ENCODE measurements at regions of chr2 and their contacts with region 1.

Region 1: GRCh38 chr2:98771721-98772524 is 41.0 kb upstream of the MGAT4A start:
- DNase-seq: peak; percentile 75
- ATAC-seq: peak; percentile 68
- H3K4me3 Mint-ChIP-seq: peak overlapping the region; percentile 74
- H3K27ac Mint-ChIP-seq: peak overlapping the region; percentile 95
- H3K4me1 Mint-ChIP-seq: peaks cover 72% of the 10 kb centered on the region
- H3K27me3 Mint-ChIP-seq: no peaks in the 10 kb centered on the region

Region 2: GRCh38 chr2:98465456-98466226 is 306.3 kb before region 1 on chr2:
- CTCF ChIA-PET with region 1: no interaction called
- POLR2A ChIA-PET with region 1: no interaction called
- intact Hi-C with region 1: loop called in 1 of 2 experiments (anchors 10 kb)
- DNase-seq: peak; percentile 78
- ATAC-seq: peak; percentile 16
- H3K4me3 Mint-ChIP-seq: peak overlapping the region; percentile 69
- H3K27ac Mint-ChIP-seq: peak overlapping the region; percentile 96
- H3K4me1 Mint-ChIP-seq: peaks cover 90% of the 10 kb centered on the region
- H3K27me3 Mint-ChIP-seq: no peaks in the 10 kb centered on the region

Region 3: DNA sequence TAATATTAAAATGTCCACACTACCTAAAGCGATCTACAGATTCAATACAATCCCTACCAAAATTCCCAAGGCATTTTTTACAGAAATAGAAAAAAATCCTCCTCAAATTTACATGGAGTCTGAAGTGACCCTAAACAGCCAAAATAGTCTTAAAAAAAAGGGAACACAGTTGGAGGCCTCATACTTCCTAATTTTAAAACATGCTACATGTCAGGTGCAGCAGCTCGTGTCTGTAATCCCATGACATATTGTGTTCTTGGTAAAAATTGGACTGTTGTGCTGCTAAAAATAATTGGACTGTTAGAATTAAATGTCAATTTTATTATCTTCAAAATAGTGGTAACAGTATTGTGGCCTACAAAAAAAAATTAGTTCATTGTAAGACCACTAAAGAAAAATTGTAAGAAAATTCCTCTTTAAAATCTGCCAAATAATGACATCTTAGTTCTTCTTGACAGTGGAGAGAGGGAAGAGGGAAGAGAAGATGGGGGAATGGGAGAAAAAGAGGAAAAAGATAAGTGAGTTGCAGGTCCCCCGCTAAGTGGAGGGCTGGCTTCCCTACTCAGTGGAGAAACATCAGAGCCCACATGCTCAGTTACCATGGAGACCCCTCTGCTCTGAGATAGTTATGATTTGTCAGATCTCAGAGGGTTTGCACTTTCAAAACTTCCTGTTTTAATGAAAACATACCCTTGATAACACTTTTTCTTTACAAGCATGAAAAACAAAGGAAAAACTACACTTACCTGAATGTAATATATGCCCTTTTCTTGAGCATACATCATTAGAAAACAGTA is 117.0 kb before region 1 on chr2:
- CTCF ChIA-PET with region 1: interaction called, 11 read pairs
- POLR2A ChIA-PET with region 1: no interaction called
- intact Hi-C with region 1: loop called in 1 of 2 experiments (anchors 2 kb)
- DNase-seq: peak; percentile 48
- ATAC-seq: peak; percentile 38
- H3K4me3 Mint-ChIP-seq: peak overlapping the region; percentile 42
- H3K27ac Mint-ChIP-seq: peak overlapping the region; percentile 72
- H3K4me1 Mint-ChIP-seq: peaks cover 80% of the 10 kb centered on the region
- H3K27me3 Mint-ChIP-seq: no peaks in the 10 kb centered on the region

Region 4: DNA sequence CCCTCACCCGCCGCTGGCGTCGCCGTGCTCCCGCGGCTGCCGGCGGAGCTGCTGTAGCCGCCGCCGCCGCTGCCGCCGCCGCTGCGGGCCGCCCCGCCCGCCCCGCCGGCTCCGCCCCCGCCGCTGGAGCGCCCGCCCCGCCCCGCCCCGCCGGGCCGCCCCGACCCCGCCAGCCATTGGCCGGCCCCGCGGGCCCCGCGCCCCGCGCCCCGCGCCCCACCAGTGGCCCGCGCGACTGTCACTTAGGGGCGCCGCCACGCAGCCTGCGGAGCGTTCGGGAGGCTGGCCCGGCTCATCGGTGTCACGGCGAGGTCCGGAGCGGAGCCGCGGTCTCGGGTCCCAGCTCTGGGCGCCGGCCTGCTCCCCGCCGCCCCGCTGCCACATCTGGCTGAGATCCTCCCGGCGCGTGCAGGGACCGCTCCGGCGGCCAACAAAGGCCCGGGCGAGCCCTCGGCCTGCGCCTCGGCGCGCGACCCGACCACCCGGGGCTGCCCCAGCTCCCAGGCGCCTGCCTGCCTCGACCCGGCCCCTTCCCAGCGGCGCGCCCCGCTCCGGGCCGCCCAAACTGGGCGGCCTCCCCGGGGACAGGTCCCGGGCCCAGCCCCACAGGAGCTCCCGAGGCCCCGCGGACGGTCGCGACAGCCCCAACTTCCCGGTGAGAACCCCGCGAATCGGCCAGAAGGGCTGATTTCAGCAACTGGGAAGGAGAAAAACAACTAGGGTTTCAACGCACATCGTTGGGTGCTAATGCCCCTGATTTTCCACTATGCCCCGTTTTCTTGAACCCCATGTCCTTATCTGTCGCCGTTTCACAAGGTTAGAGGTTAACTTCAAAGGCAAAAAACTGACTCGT is 40.7 kb before region 1 on chr2 and contains the start of gene MGAT4A:
- CTCF ChIA-PET with region 1: interaction called, 4 read pairs
- POLR2A ChIA-PET with region 1: interaction called, 16 read pairs
- intact Hi-C with region 1: loop called (anchors 1 kb)
- DNase-seq: peak; percentile 87
- ATAC-seq: peak; percentile 80
- H3K4me3 Mint-ChIP-seq: peak within 1 kb of the TSS; percentile 88
- H3K27ac Mint-ChIP-seq: peak within 1 kb of the TSS; percentile 93
- H3K4me1 Mint-ChIP-seq: peaks cover 67% of the 10 kb centered on the region
- H3K27me3 Mint-ChIP-seq: no peaks in the 10 kb centered on the region
- total RNA-seq, gene MGAT4A: 49.4 to 67.5 TPM

Region 5: GRCh38 chr2:98757904-98758421 is 14.0 kb before region 1 on chr2:
- CTCF ChIA-PET with region 1: interaction called, 16 read pairs
- POLR2A ChIA-PET with region 1: interaction called, 3 read pairs
- intact Hi-C with region 1: loop called in 1 of 2 experiments (anchors 1 kb)
- DNase-seq: peak; percentile 68
- ATAC-seq: peak; percentile 54
- H3K4me3 Mint-ChIP-seq: peak overlapping the region; percentile 57
- H3K27ac Mint-ChIP-seq: peak overlapping the region; percentile 95
- H3K4me1 Mint-ChIP-seq: peaks cover 49% of the 10 kb centered on the region
- H3K27me3 Mint-ChIP-seq: no peaks in the 10 kb centered on the region

Region 6: GRCh38 chr2:98835831-98836385 is 64.0 kb after region 1 on chr2:
- CTCF ChIA-PET with region 1: interaction called, 4 read pairs
- POLR2A ChIA-PET with region 1: no interaction called
- intact Hi-C with region 1: loop called in 1 of 2 experiments (anchors 2 kb)
- DNase-seq: peak; percentile 57
- ATAC-seq: peak; percentile 78
- H3K4me3 Mint-ChIP-seq: no peak overlapping the region
- H3K27ac Mint-ChIP-seq: peak overlapping the region; percentile 79
- H3K4me1 Mint-ChIP-seq: peaks cover 29% of the 10 kb centered on the region
- H3K27me3 Mint-ChIP-seq: no peaks in the 10 kb centered on the region

Region 7: GRCh38 chr2:98899041-98899702 is 127.2 kb after region 1 on chr2:
- CTCF ChIA-PET with region 1: no interaction called
- POLR2A ChIA-PET with region 1: no interaction called
- intact Hi-C with region 1: no loop called
- DNase-seq: no peak
- ATAC-seq: no peak
- H3K4me3 Mint-ChIP-seq: no peak overlapping the region
- H3K27ac Mint-ChIP-seq: no peak overlapping the region
- H3K4me1 Mint-ChIP-seq: no peaks in the 10 kb centered on the region
- H3K27me3 Mint-ChIP-seq: no peaks in the 10 kb centered on the region

Region 8: DNA sequence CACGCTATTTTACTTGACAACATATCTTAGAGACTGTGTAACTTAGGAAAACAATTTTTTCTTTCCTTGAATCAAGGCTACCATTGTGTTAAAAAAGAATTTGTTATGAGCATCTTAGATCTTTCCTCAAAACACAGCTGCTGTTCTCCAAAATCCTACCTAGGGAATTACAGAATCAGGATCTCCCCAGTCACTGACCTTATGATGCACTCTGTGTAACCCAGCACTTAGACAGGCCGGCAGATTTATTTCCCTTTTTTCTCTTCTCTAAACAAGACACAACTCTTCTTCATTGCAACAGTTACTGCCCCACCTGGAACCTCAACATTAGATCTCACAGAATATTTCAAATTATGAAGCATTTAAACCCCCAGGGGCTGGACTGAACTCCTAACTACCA is 356.1 kb after region 1 on chr2:
- CTCF ChIA-PET with region 1: no interaction called
- POLR2A ChIA-PET with region 1: no interaction called
- intact Hi-C with region 1: no loop called
- DNase-seq: no peak
- ATAC-seq: no peak
- H3K4me3 Mint-ChIP-seq: no peak overlapping the region
- H3K27ac Mint-ChIP-seq: no peak overlapping the region
- H3K4me1 Mint-ChIP-seq: no peaks in the 10 kb centered on the region
- H3K27me3 Mint-ChIP-seq: no peaks in the 10 kb centered on the region